ENCODE measurements at regions of chr14 and their contacts with region 1.

Region 1: DNA sequence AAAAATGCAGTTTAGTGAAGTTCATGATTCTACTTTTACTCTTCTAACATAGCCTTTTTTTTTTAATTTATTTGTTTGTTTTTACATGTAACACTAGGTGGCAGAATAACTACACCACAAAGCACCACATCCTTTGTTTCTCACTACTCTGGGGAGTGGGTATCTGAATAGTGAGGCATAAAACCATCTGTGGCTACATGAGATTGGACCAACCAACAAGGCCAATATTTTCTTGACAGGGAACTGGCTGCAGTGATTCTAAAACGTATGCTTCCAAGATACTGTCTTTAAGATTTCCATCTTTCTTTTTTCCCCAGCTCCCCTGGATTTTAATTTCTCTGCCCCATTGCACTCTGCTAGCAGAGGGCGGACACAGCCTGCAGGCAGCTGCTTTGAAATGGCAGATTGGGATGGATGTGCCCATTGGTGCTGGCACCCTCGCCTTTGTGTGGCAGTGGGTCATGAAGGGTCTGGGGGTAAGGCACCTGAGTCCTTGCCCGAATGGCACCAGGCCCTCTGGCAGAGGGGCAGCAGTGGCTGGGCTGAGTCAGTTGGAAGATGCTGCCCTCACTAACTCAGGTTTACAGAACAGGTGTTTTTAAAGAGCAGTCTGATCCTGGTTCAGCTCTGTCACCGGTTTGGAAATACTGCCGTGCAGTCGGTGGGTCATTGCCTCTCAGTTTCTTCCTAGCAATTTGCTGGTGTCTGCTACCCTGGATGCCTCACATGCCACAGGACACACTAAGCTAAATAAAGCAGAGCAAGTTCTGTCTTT is 429.1 kb downstream of the RAD51B start:
- DNase-seq: peak in 1 of 2 donors; percentile 15
- H3K4me3 ChIP-seq: no peak overlapping the region
- H3K27ac ChIP-seq: peak overlapping the region; percentile 53 to 84 (median 75)
- H3K4me1 ChIP-seq: peaks cover 32 to 80% of the 10 kb centered on the region in 2 donors
- H3K27me3 ChIP-seq: no peaks in the 10 kb centered on the region
- CTCF ChIP-seq: peak in 5 of 6 experiments; percentile 50 to 87 (median 67)
- POLR2A ChIP-seq: no peak

Region 2: GRCh38 chr14:67650694-67651093 is 598.0 kb before region 1 on chr14:
- intact Hi-C with region 1: no loop called
- DNase-seq: no peak
- H3K4me3 ChIP-seq: no peak overlapping the region
- H3K27ac ChIP-seq: no peak overlapping the region
- H3K4me1 ChIP-seq: peaks cover 8 to 16% of the 10 kb centered on the region in 2 donors
- H3K27me3 ChIP-seq: no peaks in the 10 kb centered on the region
- CTCF ChIP-seq: no peak
- POLR2A ChIP-seq: no peak

Region 3: GRCh38 chr14:68458840-68459469 is 210.3 kb after region 1 on chr14:
- intact Hi-C with region 1: no loop called
- DNase-seq: peak; percentile 87 to 90
- H3K4me3 ChIP-seq: no peak overlapping the region
- H3K27ac ChIP-seq: peak overlapping the region; percentile 82 to 85 (median 83)
- H3K4me1 ChIP-seq: peaks cover 25 to 29% of the 10 kb centered on the region in 2 donors
- H3K27me3 ChIP-seq: no peaks in the 10 kb centered on the region
- CTCF ChIP-seq: no peak
- POLR2A ChIP-seq: peak in 1 of 2 donors; percentile 30

Region 4: GRCh38 chr14:68792976-68793733 is 544.5 kb after region 1 on chr14 and contains the start of gene ZFP36L1:
- intact Hi-C with region 1: loop called (anchors 5 kb)
- DNase-seq: peak; percentile 92 to 95
- H3K4me3 ChIP-seq: peak within 1 kb of the TSS; percentile 77 to 94 (median 84)
- H3K27ac ChIP-seq: peak within 1 kb of the TSS; percentile 99 to 100 (median 100)
- H3K4me1 ChIP-seq: peaks cover 9 to 24% of the 10 kb centered on the region in 2 donors
- H3K27me3 ChIP-seq: no peaks in the 10 kb centered on the region
- CTCF ChIP-seq: peak in 1 of 6 experiments; percentile 18
- POLR2A ChIP-seq: peak; percentile 100
- total RNA-seq, gene ZFP36L1: 96.9 to 274 (median 127) TPM

Region 5: GRCh38 chr14:68816262-68816942 is 567.7 kb after region 1 on chr14:
- intact Hi-C with region 1: loop called (anchors 5 kb)
- DNase-seq: peak; percentile 89 to 90
- H3K4me3 ChIP-seq: peak overlapping the region in 1 of 3 donors; percentile 32
- H3K27ac ChIP-seq: peak overlapping the region; percentile 90 to 100 (median 99)
- H3K4me1 ChIP-seq: peaks cover 37 to 42% of the 10 kb centered on the region in 2 donors
- H3K27me3 ChIP-seq: no peaks in the 10 kb centered on the region
- CTCF ChIP-seq: peak; percentile 86 to 99 (median 97)
- POLR2A ChIP-seq: peak; percentile 2 to 80

Measured in thyroid gland (tissue), 4 donors.